Panc1 (cell line): ENCODE measurements at regions of chr19 and their contacts with region 1.

Region 1: DNA sequence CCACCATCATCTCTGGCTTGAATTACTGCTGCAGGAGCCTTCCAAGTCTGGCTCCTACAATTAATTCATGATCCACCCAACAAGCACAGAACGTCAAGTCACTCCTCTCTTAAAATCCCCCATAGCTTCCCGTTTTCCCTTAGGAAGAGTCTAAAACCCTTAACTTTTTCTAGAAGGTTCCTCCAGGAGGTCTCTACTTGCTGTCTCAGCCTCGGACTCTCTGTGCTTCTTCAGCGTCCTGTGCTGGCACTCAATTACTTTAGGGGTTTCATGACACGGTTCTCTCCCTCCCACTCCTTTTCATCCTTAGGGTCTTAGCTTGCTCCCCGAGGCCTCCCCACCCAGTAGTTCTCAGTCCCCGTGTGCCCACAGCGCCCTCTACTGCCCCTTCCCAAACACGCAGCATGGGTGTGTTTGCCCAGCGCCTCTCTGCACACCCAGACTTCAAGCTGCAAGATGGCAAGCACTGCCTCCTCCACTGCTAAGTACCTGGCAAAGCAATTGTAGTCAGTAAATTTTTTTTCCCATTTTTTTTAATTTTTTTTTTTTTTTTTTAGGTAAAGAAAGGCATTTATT is 25.8 kb upstream of the MAP3K10 start:
- DNase-seq: peak; percentile 99
- ATAC-seq: peak; percentile 76
- H3K4me3 ChIP-seq: peak overlapping the region in 1 of 2 experiments; percentile 0; a peak in 1 of 4 replicates
- H3K27ac ChIP-seq: 0 out of 2 replicates have a peak overlapping the region, but pooled peaks have one; percentile 0
- H3K4me1 ChIP-seq: peaks cover 15% of the 10 kb centered on the region
- H3K27me3 ChIP-seq: no peaks in the 10 kb centered on the region
- CTCF ChIP-seq: no peak

Region 2: GRCh38 chr19:39144245-39145071 is 1021.0 kb before region 1 on chr19:
- CTCF ChIA-PET with region 1: interaction called, 10 read pairs
- POLR2A ChIA-PET with region 1: no interaction called
- in situ Hi-C with region 1: no loop called
- intact Hi-C with region 1: no loop called
- DNase-seq: no peak
- ATAC-seq: peak; percentile 64
- H3K4me3 ChIP-seq: no peak overlapping the region
- H3K27ac ChIP-seq: peak overlapping the region; percentile 0; the same call in 1 of the 2 replicates
- H3K4me1 ChIP-seq: peaks cover 31% of the 10 kb centered on the region
- H3K27me3 ChIP-seq: no peaks in the 10 kb centered on the region
- CTCF ChIP-seq: no peak

Region 3: DNA sequence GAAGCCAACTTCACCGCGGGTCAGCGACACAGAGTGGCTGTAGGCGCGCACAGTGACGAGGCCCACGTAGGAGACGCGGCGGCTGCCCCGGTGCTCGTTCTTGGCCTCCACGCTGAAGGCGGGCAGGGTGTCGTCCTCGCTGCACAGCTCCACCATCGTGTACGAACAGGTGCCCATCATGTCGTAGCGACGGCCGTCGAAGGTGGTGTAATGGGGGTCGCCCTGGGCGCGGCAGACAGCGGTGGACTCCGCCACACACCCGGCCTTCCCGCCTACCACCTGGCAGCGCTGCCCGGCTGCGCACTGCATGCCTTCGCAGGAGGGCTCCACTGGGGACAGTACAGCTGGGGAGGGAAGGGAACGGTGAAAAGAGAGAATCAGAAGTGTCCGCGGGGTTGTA is 241.1 kb before region 1 on chr19:
- CTCF ChIA-PET with region 1: interaction called, 10 read pairs
- POLR2A ChIA-PET with region 1: interaction called, 8 read pairs
- in situ Hi-C with region 1: no loop called
- intact Hi-C with region 1: no loop called
- DNase-seq: no peak
- ATAC-seq: peak; percentile 6; the same call in 1 of the 2 replicates
- H3K4me3 ChIP-seq: no peak overlapping the region
- H3K27ac ChIP-seq: no peak overlapping the region
- H3K4me1 ChIP-seq: no peaks in the 10 kb centered on the region
- H3K27me3 ChIP-seq: peaks cover 5% of the 10 kb centered on the region; the same call in 1 of the 2 replicates
- CTCF ChIP-seq: no peak

Region 4: GRCh38 chr19:39937094-39937720 is 228.2 kb before region 1 on chr19:
- CTCF ChIA-PET with region 1: no interaction called
- POLR2A ChIA-PET with region 1: no interaction called
- in situ Hi-C with region 1: no loop called
- intact Hi-C with region 1: no loop called
- DNase-seq: no peak
- ATAC-seq: 0 out of 2 replicates have a peak, but pooled peaks have one; percentile 1
- H3K4me3 ChIP-seq: no peak overlapping the region
- H3K27ac ChIP-seq: no peak overlapping the region
- H3K4me1 ChIP-seq: peaks cover 6% of the 10 kb centered on the region
- H3K27me3 ChIP-seq: peaks cover 42% of the 10 kb centered on the region
- CTCF ChIP-seq: no peak

Region 5: DNA sequence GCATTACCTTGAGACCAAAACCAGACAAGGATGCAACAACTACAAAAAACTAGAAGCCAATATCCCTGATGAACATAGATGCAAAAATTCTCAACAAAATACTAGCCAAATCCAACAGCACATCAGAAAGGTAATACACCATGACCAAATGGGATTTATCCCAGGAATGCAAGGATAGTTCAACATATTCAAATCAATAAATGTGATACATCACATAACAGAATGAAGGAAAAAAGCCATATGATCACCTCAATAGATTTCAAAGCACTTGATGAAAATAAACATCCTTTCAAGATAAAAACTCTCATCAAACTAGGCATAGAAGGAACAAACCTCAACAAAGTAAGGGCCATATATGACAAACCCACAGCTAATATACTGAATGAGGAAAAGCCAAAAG is 178.8 kb before region 1 on chr19:
- CTCF ChIA-PET with region 1: no interaction called
- POLR2A ChIA-PET with region 1: no interaction called
- in situ Hi-C with region 1: no loop called
- intact Hi-C with region 1: no loop called
- DNase-seq: no peak
- ATAC-seq: no peak
- H3K4me3 ChIP-seq: no peak overlapping the region
- H3K27ac ChIP-seq: no peak overlapping the region
- H3K4me1 ChIP-seq: no peaks in the 10 kb centered on the region
- H3K27me3 ChIP-seq: no peaks in the 10 kb centered on the region
- CTCF ChIP-seq: no peak

Region 6: GRCh38 chr19:40009674-40010073 is 155.8 kb before region 1 on chr19:
- CTCF ChIA-PET with region 1: no interaction called
- POLR2A ChIA-PET with region 1: no interaction called
- in situ Hi-C with region 1: no loop called
- intact Hi-C with region 1: no loop called
- DNase-seq: no peak
- ATAC-seq: no peak
- H3K4me3 ChIP-seq: no peak overlapping the region
- H3K27ac ChIP-seq: no peak overlapping the region
- H3K4me1 ChIP-seq: peaks cover 8% of the 10 kb centered on the region; the same call in 1 of the 2 replicates
- H3K27me3 ChIP-seq: no peaks in the 10 kb centered on the region
- CTCF ChIP-seq: no peak

Region 7: GRCh38 chr19:40090241-40091204 is 74.9 kb before region 1 on chr19 and contains the start of gene ZNF780A:
- CTCF ChIA-PET with region 1: interaction called, 5 read pairs
- POLR2A ChIA-PET with region 1: interaction called, 12 read pairs
- in situ Hi-C with region 1: no loop called
- intact Hi-C with region 1: no loop called
- DNase-seq: peak; percentile 100
- ATAC-seq: peak; percentile 99
- H3K4me3 ChIP-seq: peak within 1 kb of the TSS; percentile 36 to 48
- H3K27ac ChIP-seq: peak within 1 kb of the TSS; percentile 83
- H3K4me1 ChIP-seq: peaks cover 15% of the 10 kb centered on the region
- H3K27me3 ChIP-seq: no peaks in the 10 kb centered on the region; the same call in 1 of the 2 replicates
- CTCF ChIP-seq: no peak
- total RNA-seq, gene ZNF780A: 251 TPM

Region 8: DNA sequence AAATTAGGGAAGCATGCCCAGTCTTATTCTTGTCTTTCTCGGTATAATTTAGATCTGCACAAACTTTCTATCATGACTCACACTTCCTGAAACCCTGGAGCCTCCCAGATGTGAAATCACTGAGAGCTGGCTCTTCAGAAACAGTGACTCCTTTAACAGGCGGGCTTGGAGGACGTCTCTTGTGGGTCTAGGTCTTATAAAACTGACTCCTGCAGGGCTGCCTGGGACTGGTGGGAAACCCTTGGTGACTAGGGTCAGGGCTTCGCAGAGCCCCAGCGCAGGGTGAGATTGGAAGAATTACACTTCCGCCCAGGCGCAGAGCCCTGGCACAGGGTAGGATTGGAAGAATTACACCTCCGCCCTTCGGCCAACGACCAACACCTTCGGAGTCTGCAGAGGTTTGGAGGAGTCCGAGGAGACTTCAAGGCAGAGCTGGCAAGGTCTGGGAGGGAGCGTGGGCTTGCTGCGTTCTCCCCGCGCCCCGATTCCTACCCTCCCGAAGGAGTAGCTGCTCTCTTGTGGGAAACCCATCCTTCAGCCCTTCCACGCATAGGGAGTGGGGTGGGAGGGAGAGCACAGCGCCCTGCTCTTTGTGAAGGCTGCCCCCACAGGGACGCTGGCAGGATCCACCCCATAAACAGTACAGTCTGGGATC is 17.6 kb before region 1 on chr19:
- CTCF ChIA-PET with region 1: interaction called, 142 read pairs
- POLR2A ChIA-PET with region 1: interaction called, 6 read pairs
- in situ Hi-C with region 1: no loop called
- intact Hi-C with region 1: no loop called
- DNase-seq: peak; percentile 100
- ATAC-seq: peak; percentile 87
- H3K4me3 ChIP-seq: peak overlapping the region; percentile 24 to 50
- H3K27ac ChIP-seq: peak overlapping the region; percentile 42
- H3K4me1 ChIP-seq: peaks cover 14% of the 10 kb centered on the region
- H3K27me3 ChIP-seq: no peaks in the 10 kb centered on the region
- CTCF ChIP-seq: no peak

Region 9: DNA sequence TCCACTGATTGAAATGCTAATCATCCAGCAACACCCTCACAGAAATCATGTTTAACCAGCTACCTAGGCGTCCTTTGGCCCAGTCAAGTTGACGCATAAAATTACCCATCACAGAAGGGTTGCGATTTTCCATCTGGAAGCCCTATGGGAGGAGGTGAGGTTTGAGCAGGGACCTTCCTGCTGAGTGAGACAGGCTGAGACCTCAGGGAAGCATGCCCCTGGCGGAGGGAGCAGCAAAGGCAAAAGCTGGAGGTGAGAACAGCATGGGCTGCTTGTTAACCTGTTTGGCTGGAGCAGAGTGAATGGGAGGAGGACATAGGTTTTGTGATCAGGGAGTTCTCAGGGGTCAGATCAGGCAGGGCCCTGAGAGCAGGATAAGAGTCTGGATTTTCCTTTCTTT is 45.5 kb after region 1 on chr19:
- CTCF ChIA-PET with region 1: interaction called, 11 read pairs
- POLR2A ChIA-PET with region 1: no interaction called
- in situ Hi-C with region 1: no loop called
- intact Hi-C with region 1: no loop called
- DNase-seq: no peak
- ATAC-seq: 0 out of 2 replicates have a peak, but pooled peaks have one; percentile 2
- H3K4me3 ChIP-seq: no peak overlapping the region
- H3K27ac ChIP-seq: no peak overlapping the region
- H3K4me1 ChIP-seq: no peaks in the 10 kb centered on the region
- H3K27me3 ChIP-seq: no peaks in the 10 kb centered on the region
- CTCF ChIP-seq: no peak

Region 10: GRCh38 chr19:40294560-40294959 is 129.1 kb after region 1 on chr19:
- CTCF ChIA-PET with region 1: interaction called, 10 read pairs
- POLR2A ChIA-PET with region 1: interaction called, 13 read pairs
- in situ Hi-C with region 1: no loop called
- intact Hi-C with region 1: no loop called
- DNase-seq: no peak
- ATAC-seq: peak; percentile 4
- H3K4me3 ChIP-seq: no peak overlapping the region
- H3K27ac ChIP-seq: no peak overlapping the region
- H3K4me1 ChIP-seq: no peaks in the 10 kb centered on the region
- H3K27me3 ChIP-seq: peaks cover 4% of the 10 kb centered on the region; the same call in 1 of the 2 replicates
- CTCF ChIP-seq: no peak